ENCODE measurements at regions of chr10 and their contacts with region 1.

Region 1: DNA sequence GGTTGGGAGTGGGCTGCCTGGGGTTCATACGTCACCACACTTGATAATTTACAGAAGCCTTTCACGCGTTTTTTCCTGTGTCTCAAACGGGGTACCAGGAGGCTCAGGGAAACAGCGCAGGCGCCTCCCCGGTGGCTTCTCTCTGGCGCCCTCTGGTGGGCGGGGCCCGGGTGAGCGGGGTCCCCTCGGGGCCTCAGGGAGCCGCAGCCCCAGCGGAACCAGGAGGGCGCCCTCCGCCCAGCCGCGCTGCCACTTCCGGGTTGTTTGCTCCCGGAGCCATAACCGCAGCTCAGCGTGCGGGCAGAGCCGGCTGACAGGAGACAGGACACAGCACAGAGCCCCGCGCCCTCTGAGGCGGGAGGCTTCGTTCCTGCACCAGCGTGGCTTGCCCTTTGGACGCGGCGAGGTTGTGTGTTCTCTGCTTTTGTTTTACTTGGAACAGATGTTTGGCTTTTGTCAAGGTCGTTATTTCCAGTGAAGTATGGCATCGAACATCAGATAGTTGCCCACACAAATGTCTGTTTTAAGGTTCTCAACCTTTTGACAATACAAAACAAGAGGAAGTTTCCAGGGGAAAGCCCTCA is 6.9 kb upstream of the CYP2E1 start:
- DNase-seq: peak; percentile 43 to 94
- H3K4me3 ChIP-seq: no peak overlapping the region
- CTCF ChIP-seq: peak in 1 of 3 donors; percentile 55
- POLR2A ChIP-seq: no peak

Region 2: DNA sequence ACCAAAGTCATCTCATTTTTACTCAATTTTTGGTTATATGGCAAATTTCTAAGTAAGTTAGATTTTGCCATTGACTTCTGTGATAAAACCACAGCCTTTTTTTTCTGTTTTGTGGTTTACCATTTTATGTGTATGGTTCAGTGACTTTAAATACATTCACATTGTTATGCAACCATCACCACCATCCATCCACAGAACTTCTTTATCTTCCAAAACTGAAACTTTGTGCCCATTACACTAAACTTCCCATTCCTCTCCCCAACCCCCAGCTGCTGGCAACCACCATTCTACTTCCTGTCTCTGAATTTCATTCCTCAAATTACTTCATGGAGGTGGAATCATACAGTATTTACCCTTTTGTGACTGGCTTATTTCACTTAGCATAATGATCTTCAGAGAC is 1928.3 kb before region 1 on chr10:
- intact Hi-C with region 1: no loop called
- DNase-seq: no peak
- H3K4me3 ChIP-seq: no peak overlapping the region
- CTCF ChIP-seq: no peak
- POLR2A ChIP-seq: no peak

Region 3: DNA sequence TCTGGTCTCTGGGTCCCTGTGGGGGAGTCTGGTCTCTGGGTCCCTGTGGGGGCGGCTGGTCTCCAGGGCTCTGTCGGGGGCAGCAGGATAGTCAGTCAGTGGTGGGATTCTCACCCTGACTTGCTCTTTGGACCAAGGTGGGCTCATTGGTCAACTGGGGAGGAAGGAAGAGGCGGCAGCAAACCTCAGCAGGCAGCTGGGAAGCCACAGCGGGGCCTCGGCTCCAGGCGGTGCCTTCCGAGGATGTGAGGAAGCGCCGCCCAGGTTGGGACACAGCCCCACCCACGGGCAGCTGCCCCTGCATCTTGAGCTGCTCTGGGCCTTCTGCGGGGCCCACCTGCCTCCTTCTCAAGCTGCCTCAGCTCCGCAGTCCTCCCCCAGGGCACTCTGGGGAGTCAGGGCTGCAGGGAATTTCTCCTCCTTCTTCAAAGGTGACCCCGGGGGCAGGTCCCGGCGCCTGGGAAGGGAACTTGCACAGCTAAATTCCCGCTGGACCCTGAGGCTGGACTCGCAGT is 380.6 kb before region 1 on chr10:
- intact Hi-C with region 1: no loop called
- DNase-seq: no peak
- H3K4me3 ChIP-seq: no peak overlapping the region
- CTCF ChIP-seq: no peak
- POLR2A ChIP-seq: no peak

Region 4: GRCh38 chr10:133329491-133330202 is 190.6 kb before region 1 on chr10:
- intact Hi-C with region 1: loop called (anchors 10 kb)
- DNase-seq: peak; percentile 71 to 96
- H3K4me3 ChIP-seq: no peak overlapping the region
- CTCF ChIP-seq: no peak
- POLR2A ChIP-seq: no peak

Region 5: DNA sequence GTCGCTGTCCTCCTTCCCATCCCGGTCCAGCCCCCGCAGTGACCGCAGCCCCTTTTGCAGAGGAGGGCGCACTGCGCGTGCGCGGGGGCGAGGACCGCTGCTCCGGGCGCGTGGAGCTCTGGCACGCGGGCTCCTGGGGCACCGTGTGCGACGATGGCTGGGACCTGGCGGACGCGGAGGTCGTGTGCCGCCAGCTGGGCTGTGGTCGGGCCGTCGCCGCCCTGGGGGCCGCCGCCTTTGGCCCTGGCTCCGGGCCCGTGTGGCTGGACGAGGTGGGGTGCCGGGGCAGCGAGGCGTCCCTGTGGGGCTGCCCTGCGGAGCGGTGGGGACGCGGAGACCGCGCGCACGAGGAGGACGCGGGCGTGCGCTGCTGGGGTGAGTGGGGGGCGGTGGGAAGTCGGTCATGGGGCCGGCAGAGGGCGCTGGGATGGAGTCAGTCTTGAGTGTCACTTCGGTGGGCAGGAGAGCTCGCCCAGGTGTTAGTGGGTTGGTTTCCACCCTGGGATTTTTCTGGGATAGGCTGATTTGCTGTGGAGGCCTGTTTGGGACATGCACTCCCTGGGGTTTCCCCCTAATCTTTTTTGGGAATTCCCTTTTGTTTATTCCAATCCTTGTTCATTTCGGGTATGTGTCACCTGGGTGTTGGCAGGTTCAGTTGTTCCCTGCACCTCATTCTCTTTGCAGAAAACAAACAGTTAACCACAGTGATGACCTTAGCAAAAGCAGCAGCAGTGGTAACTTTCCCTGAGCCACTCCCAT is 54.9 kb before region 1 on chr10:
- intact Hi-C with region 1: no loop called
- DNase-seq: no peak
- H3K4me3 ChIP-seq: no peak overlapping the region
- CTCF ChIP-seq: no peak
- POLR2A ChIP-seq: no peak